ENCODE measurements at regions of chr4 and their contacts with region 1.

Region 1: GRCh38 chr4:166903408-166903807 is 330.9 kb downstream of the SPOCK3 start:
- DNase-seq: no peak
- H3K4me3 ChIP-seq: no peak overlapping the region
- CTCF ChIP-seq: no peak
- POLR2A ChIP-seq: no peak

Region 2: DNA sequence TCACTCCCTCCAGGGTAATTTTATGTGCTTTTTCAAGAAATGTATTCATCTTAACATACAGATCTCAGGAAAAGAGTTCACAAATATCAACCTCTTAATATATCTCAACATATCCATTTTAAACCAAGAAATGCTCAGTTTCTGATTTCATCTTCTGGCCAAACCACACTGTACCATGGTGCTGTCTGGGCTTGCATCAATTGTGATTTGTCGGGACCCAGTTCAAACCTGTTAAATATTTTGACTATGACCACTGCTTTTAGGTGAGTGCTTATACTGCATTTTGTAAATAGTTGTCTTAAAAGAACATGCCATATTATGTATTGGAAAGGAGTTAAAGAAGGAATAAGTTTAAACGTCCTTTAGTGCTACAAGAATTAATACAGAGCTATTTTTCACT is 21.2 kb before region 1 on chr4:
- intact Hi-C with region 1: no loop called
- DNase-seq: no peak
- H3K4me3 ChIP-seq: no peak overlapping the region
- CTCF ChIP-seq: no peak
- POLR2A ChIP-seq: no peak

Region 3: DNA sequence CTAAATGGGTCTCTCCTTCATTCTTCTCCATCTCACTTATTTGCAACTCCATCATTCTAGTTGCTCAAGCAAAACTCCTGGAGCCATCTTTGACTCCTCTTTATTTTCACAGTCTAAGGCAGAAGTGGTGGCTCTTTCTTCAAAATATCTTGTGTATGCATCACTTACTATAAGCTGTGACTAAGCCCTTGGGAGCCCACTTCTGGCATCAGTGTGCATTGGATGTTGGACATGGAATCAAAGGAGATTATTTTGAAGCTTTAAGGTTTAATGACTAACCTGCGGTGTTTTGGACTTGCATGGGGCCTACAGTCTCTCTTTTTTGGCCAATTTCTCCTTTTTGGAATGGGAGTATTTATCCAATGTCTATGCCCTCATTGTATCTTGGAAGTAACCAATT is 54.0 kb after region 1 on chr4:
- intact Hi-C with region 1: no loop called
- DNase-seq: no peak
- H3K4me3 ChIP-seq: no peak overlapping the region
- CTCF ChIP-seq: no peak
- POLR2A ChIP-seq: no peak

Region 4: DNA sequence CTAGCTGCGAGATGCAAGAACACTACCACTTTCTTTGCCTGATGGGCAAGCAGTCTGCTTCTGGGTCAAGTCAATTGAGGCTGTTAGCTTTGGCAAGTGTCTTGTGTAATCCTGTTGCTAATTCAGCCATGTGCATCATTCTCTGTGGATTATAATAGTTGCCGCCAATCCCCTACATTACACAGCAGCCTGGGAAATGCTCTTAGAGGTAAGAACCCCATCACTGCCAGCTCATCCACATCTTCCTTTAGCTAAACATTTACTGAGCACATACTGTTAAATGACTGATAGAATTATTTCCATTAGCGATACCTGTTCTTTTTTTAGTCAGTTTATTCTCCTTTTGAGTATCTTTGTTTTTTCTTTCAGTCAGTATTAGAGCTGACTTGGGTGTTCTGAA is 1990.4 kb after region 1 on chr4:
- intact Hi-C with region 1: loop called (anchors 10 kb)
- DNase-seq: no peak
- H3K4me3 ChIP-seq: no peak overlapping the region
- CTCF ChIP-seq: no peak
- POLR2A ChIP-seq: no peak